ENCODE measurements at regions of chr3 and their contacts with region 1.

Region 1: DNA sequence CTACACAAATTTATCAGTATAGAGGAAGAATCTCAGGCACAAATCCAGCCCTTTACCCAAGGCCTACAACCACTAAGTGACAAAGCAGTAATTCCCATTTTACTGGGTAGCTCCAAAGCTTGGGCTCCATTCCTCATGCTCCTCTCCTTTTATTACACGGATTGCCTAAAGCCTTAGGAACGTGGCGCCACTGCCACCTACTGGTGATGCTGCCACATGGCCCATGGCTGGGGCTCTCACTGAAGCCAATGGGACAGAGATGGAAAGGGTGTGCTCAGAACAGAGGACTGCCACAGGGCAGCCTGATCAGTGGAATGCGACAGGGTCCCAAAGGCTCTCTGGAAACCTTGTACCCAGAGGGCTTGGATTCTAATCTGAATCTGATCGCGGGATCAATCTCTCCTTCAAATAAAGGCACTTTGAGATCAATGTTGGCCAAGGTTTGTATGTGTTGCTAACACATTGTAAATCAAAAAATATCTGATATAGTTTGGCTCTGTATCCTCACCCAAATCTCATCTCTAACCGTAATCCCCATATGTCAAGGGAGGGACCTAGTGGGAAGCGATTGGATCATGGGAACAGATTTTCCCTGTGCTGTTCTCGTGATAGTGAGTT is 33.5 kb upstream of the LYZL4 start:
- DNase-seq: peak; percentile 85
- H3K4me3 ChIP-seq: no peak overlapping the region
- H3K27ac ChIP-seq: no peak overlapping the region
- H3K4me1 ChIP-seq: no peaks in the 10 kb centered on the region
- H3K27me3 ChIP-seq: no peaks in the 10 kb centered on the region
- CTCF ChIP-seq: peak; percentile 90 to 97 (median 96)
- EP300 ChIP-seq: no peak
- POLR2A ChIP-seq: no peak

Region 2: DNA sequence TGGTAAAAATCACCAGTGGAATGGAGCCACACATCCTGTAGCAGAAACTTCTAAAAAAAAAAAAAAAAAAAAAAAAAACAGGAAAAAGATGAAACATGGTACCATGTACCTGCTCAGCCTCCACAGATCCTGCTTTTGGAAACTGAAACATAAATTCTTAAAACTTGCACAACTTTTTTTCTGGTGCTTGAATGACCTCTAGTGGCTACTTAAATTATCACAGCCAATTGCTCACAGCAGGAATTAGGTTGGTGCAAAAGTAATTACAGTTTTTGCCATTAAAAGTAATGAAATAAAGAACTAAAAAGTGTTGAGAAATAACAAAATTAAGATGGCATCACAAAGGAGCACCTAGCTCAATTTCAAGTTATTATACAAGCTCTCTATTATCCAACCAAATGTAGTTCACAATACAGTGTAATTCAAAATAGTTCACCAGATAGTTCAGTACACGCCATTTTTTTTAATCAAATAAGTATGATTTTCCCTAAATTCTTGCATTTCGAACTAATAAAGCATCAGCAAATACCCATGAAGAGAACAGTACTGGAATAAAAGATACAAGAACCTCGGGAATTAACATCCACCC is 562.6 kb before region 1 on chr3:
- in situ Hi-C with region 1: loop called in 1 of 4 experiments (anchors 25 kb)
- intact Hi-C with region 1: no loop called
- DNase-seq: no peak
- H3K4me3 ChIP-seq: no peak overlapping the region
- H3K27ac ChIP-seq: no peak overlapping the region
- H3K4me1 ChIP-seq: no peaks in the 10 kb centered on the region
- H3K27me3 ChIP-seq: no peaks in the 10 kb centered on the region
- CTCF ChIP-seq: peak; percentile 68 to 78 (median 71)
- EP300 ChIP-seq: no peak
- POLR2A ChIP-seq: no peak

Region 3: GRCh38 chr3:41900265-41900664 is 543.7 kb before region 1 on chr3:
- in situ Hi-C with region 1: loop called in 3 of 4 experiments (anchors 25 kb)
- intact Hi-C with region 1: no loop called
- DNase-seq: no peak
- H3K4me3 ChIP-seq: no peak overlapping the region
- H3K27ac ChIP-seq: no peak overlapping the region
- H3K4me1 ChIP-seq: no peaks in the 10 kb centered on the region
- H3K27me3 ChIP-seq: no peaks in the 10 kb centered on the region
- CTCF ChIP-seq: no peak
- EP300 ChIP-seq: no peak
- POLR2A ChIP-seq: no peak

Region 4: GRCh38 chr3:42118762-42119361 is 325.1 kb before region 1 on chr3:
- in situ Hi-C with region 1: loop called in 1 of 4 experiments (anchors 25 kb)
- intact Hi-C with region 1: no loop called
- DNase-seq: peak; percentile 42
- H3K4me3 ChIP-seq: no peak overlapping the region
- H3K27ac ChIP-seq: peak overlapping the region in 1 of 4 donors; percentile 8
- H3K4me1 ChIP-seq: peaks cover 7 to 48% (median 9%) of the 10 kb centered on the region in 4 donors
- H3K27me3 ChIP-seq: no peaks in the 10 kb centered on the region
- CTCF ChIP-seq: peak in 4 of 5 experiments; percentile 11 to 52 (median 33)
- EP300 ChIP-seq: no peak
- POLR2A ChIP-seq: no peak

Region 5: DNA sequence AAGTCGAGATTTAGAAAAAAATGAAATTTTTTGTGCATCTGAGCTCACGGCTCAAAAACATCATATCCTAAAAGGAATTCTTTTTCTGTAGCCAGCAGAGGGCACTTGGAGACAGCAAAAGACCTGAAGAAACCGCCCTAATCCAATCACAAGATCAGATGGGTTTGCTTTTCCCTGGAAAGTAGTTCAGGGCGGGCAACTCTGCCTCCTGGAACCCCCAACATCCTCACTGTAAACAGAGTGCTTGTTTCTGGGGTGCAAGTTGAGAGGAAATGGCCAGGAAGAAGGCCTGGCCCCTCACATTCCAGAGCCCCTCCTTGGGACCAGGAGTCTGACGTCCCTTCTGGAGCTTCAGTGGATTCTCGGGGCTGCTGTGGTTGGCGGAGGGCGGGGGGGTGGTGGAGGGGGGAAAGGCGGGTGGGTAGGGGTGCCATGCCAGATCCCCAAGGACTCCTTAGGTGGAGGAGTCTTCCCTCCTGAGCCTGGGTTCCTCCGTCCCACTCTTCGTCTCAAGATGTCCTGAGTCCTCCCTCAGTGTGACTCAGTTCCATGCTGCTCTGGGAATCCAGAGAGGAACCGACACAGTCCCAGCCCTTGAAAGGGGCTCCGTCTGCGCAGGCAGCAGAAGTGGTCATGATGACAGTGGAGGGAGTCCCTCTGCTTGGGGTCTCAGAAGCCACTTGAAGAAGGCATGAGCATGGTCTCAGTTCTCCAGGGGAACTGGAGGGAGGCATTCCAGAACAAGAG is 213.8 kb before region 1 on chr3:
- in situ Hi-C with region 1: no loop called
- intact Hi-C with region 1: loop called (anchors 2 kb)
- DNase-seq: no peak
- H3K4me3 ChIP-seq: no peak overlapping the region
- H3K27ac ChIP-seq: no peak overlapping the region
- H3K4me1 ChIP-seq: peaks cover 0 to 6% (median 0%) of the 10 kb centered on the region in 4 donors
- H3K27me3 ChIP-seq: peaks cover 3% of the 10 kb centered on the region
- CTCF ChIP-seq: peak; percentile 39 to 56 (median 53)
- EP300 ChIP-seq: no peak
- POLR2A ChIP-seq: no peak

Region 6: GRCh38 chr3:42247576-42248027 is 196.3 kb before region 1 on chr3:
- in situ Hi-C with region 1: loop called (anchors 5 to 10 kb)
- intact Hi-C with region 1: loop called (anchors 5 kb)
- DNase-seq: peak; percentile 55
- H3K4me3 ChIP-seq: no peak overlapping the region
- H3K27ac ChIP-seq: no peak overlapping the region
- H3K4me1 ChIP-seq: peaks cover 0 to 6% (median 0%) of the 10 kb centered on the region in 4 donors
- H3K27me3 ChIP-seq: peaks cover 26% of the 10 kb centered on the region
- CTCF ChIP-seq: peak; percentile 60 to 74 (median 68)
- EP300 ChIP-seq: no peak
- POLR2A ChIP-seq: no peak

Region 7: GRCh38 chr3:42256135-42256819 is 187.7 kb before region 1 on chr3:
- in situ Hi-C with region 1: loop called in 3 of 4 experiments (anchors 5 to 10 kb)
- intact Hi-C with region 1: no loop called
- DNase-seq: no peak
- H3K4me3 ChIP-seq: no peak overlapping the region
- H3K27ac ChIP-seq: no peak overlapping the region
- H3K4me1 ChIP-seq: no peaks in the 10 kb centered on the region
- H3K27me3 ChIP-seq: peaks cover 32% of the 10 kb centered on the region
- CTCF ChIP-seq: no peak
- EP300 ChIP-seq: no peak
- POLR2A ChIP-seq: no peak

Region 8: DNA sequence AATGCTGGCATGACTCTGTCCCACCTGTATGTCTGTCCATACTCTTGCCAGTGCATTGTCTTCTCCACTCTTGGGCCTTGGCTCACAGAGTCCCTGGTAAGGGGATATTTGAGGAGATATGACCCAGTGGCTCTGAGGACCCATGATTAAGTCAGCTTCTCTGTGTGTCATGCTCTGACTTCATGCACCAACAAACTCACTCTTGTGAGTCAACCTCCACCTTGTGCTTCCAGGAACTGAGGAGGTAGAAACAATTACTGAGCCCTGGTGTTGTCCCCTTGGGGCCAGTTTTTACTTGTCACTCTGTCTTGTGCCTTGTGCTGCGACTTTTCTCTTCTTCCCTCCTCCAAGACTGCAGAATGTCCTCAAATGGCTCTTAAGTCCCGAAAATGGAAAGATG is 1373.9 kb after region 1 on chr3:
- in situ Hi-C with region 1: no loop called
- intact Hi-C with region 1: no loop called
- DNase-seq: no peak
- H3K4me3 ChIP-seq: no peak overlapping the region
- H3K27ac ChIP-seq: no peak overlapping the region
- H3K4me1 ChIP-seq: no peaks in the 10 kb centered on the region
- H3K27me3 ChIP-seq: no peaks in the 10 kb centered on the region
- CTCF ChIP-seq: no peak
- EP300 ChIP-seq: no peak
- POLR2A ChIP-seq: no peak